ENCODE measurements at regions of chr3 and their contacts with region 1.

Region 1: DNA sequence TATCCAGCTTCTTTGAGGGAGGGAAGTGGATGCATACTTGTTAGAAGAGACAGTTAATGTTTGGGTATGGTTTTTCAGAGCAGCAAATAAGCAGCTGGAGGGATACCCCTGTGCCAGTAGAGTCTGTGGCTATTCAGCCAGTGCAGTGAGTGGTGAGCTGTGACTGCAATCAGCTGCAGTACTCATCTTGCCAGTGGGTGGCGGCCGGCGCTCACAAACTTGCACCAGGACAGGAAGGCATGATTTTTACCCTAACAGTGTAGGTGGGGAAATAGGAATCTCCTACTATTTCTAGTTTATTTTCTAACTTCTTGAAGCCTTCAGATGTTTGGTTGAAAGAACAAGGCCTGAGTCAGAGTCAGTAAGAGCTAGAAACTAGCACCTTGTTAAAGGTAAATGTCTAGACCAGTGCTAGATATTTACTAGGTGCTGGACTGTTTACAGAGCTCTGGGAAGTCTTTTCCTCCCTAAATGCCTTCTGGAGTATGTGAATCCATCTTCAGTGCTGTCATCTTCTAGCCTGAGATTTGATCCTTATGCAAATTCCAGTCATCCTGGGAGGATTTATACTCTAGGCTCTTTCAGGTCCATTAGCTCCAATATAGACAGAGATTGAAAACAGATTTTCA is 23.6 kb downstream of the TIMP4 start:
- DNase-seq: peak; percentile 62 to 81
- H3K4me3 ChIP-seq: no peak overlapping the region
- H3K4me1 ChIP-seq: no peaks in the 10 kb centered on the region
- H3K27me3 ChIP-seq: no peaks in the 10 kb centered on the region

Region 2: GRCh38 chr3:11430624-11431023 is 704.5 kb before region 1 on chr3:
- in situ Hi-C with region 1: no loop called
- DNase-seq: no peak
- H3K4me3 ChIP-seq: no peak overlapping the region
- H3K4me1 ChIP-seq: peaks cover 16% of the 10 kb centered on the region
- H3K27me3 ChIP-seq: no peaks in the 10 kb centered on the region

Region 3: GRCh38 chr3:12484198-12484974 is 349.2 kb after region 1 on chr3 and contains the start of gene TSEN2:
- in situ Hi-C with region 1: loop called (anchors 5 kb)
- DNase-seq: peak; percentile 92 to 95
- H3K4me3 ChIP-seq: peak within 1 kb of the TSS; percentile 67
- H3K4me1 ChIP-seq: peaks cover 14% of the 10 kb centered on the region
- H3K27me3 ChIP-seq: no peaks in the 10 kb centered on the region

Region 4: DNA sequence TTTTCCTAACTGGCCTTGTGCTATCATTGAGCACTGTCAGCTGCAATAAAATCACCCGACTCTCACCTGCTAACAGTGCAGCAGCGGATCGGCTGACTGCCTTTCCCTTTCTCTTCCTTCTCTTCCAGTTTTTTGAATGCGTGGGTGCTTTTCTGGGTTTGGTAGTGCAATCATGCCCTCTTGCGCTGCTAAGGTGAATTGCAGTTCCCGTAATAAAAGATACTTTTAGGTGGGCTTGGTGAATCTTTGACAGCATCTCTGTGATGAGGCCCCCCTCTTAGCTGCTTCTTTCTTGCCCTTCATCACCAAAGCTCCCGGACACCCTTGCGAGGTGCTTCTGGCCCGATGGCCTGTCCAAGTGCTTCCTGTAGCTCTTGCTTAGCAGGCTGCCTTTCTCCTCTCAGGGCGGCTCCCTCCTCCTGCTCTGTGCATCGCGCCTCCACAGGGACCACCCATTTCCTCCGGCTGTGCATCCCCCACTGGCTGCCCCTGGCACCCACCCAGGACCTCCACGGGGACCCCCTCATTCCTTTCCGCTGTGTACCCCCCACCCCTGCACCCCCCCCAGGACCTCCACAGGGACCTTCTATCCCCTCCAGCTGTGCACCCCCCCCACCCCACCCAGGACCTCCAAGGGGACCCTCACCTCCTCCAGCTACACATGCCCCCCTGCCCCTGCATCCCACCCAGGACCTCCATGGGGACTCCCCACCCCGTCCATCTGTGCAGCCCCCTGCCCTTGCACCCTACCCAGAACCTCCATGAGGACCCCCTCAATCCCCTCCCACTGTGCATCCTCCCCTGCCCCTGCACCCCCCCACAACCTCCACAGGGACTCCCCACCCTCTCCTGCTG is 757.1 kb after region 1 on chr3:
- in situ Hi-C with region 1: loop called (anchors 25 kb)
- DNase-seq: peak; percentile 65 to 68
- H3K4me3 ChIP-seq: no peak overlapping the region
- H3K4me1 ChIP-seq: peaks cover 5% of the 10 kb centered on the region; the same call in 1 of the 2 replicates
- H3K27me3 ChIP-seq: peaks cover 29% of the 10 kb centered on the region

Region 5: DNA sequence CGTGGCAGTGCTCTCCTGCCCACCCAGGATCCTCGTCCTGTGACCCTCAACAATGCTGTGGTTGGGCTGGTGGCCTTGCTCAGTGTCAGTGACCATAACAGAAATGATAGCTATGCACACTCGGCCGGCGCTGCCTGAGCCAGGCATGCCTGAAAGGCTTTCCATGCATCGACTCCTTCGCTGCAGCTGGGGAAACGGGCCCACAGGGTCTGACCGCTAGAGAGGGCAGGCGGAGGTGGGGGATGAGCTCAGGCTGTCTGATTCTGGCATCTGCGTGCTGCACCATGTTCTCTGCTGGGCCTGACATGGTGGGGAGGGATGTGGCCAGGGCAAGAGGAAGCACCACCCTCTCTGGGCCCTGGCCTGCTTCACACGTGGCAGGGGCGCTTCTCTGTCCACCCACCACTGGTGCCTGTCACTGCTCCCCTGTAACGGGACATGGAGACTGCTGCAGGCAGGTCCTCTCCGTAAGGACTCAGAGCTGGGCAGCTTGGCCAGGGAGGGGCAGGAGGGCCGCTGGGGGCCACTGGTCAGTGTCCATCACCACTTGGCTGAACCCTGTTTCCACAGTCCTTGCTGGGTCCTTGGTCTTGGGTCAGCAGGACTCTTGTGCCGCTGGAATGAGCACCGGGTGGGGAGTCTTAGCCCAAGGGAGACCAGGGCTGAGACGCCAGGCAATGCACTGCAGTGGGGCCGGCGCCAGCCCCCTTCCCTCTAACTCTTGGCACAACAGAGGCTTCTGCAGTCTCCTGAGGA is 770.4 kb after region 1 on chr3:
- in situ Hi-C with region 1: no loop called
- DNase-seq: no peak
- H3K4me3 ChIP-seq: no peak overlapping the region
- H3K4me1 ChIP-seq: no peaks in the 10 kb centered on the region
- H3K27me3 ChIP-seq: no peaks in the 10 kb centered on the region